Mammary epithelial cell (primary cell): ENCODE measurements at regions of chr15 and their contacts with region 1.

Region 1: DNA sequence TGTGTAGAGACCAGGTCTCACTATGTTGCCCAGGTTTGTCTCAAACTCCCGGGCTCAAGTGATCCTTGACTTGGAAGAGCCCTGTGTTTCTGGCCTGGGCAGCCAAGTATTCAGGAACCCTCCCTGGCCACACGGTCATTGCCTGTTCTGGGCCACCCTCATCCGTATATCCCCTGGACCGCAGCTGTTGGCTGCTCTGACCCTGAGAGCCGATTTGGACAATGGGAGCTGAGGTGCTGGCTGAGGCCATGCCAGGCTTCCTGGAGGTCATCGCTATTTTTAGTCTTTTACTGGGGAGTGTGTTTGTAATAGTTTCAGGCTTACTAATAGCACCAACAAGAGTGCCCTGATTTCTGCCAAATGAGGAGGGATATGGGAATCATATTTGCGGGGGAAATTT is 60.7 kb downstream of the ADAMTS7 start:
- DNase-seq: no peak
- H3K4me3 ChIP-seq: no peak overlapping the region
- H3K27ac ChIP-seq: no peak overlapping the region
- H3K4me1 ChIP-seq: no peaks in the 10 kb centered on the region
- H3K27me3 ChIP-seq: no peaks in the 10 kb centered on the region
- CTCF ChIP-seq: no peak

Region 2: GRCh38 chr15:78618490-78618934 is 132.1 kb before region 1 on chr15:
- CTCF ChIA-PET with region 1: no interaction called
- dilution Hi-C with region 1: no loop called
- in situ Hi-C with region 1: loop called in 1 of 2 experiments (anchors 5 kb)
- intact Hi-C with region 1: loop called (anchors 2 kb)
- DNase-seq: peak; percentile 57
- H3K4me3 ChIP-seq: no peak overlapping the region
- H3K27ac ChIP-seq: no peak overlapping the region
- H3K4me1 ChIP-seq: peaks cover 23% of the 10 kb centered on the region
- H3K27me3 ChIP-seq: peaks cover 21% of the 10 kb centered on the region
- CTCF ChIP-seq: peak; percentile 66 to 76

Region 3: DNA sequence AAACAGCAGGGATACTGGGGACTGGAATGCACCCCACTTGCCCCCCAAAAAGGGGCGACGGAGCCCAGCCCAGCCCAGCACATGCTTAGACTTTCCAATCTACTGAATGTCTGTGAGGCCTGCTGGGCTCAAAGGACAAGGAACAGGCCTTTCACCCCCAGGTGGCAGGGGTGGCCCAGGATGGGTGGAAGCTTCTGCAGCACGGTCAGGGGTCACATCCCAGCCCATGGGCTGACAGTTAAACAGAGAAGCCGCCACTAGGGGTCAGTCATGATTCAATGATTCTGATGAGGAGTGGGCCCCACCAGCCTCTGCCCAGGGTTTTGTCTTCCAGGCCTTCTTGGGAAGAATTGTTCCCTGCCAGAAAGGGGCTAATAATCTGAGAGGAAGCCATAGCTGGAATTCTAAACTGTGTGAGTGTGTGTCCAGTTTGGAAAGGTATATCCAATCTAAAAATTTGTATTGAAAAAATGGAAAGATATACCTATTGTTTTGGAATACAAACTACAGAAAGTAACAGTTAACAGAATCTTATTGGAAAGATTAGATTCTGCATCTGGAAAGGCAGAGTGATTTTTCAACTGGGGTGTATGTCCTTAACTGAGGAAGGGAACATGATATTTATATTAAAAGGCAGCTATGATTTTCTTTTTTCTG is 111.8 kb before region 1 on chr15:
- CTCF ChIA-PET with region 1: no interaction called
- dilution Hi-C with region 1: no loop called
- in situ Hi-C with region 1: no loop called
- intact Hi-C with region 1: loop called (anchors 2 kb)
- DNase-seq: no peak
- H3K4me3 ChIP-seq: no peak overlapping the region
- H3K27ac ChIP-seq: no peak overlapping the region
- H3K4me1 ChIP-seq: peaks cover 10% of the 10 kb centered on the region
- H3K27me3 ChIP-seq: no peaks in the 10 kb centered on the region
- CTCF ChIP-seq: peak; percentile 45 to 73

Region 4: GRCh38 chr15:78714890-78715289 is 35.7 kb before region 1 on chr15:
- CTCF ChIA-PET with region 1: no interaction called
- dilution Hi-C with region 1: no loop called
- in situ Hi-C with region 1: no loop called
- intact Hi-C with region 1: loop called (anchors 5 kb)
- DNase-seq: peak; percentile 48
- H3K4me3 ChIP-seq: no peak overlapping the region
- H3K27ac ChIP-seq: peak overlapping the region; percentile 67
- H3K4me1 ChIP-seq: peaks cover 12% of the 10 kb centered on the region
- H3K27me3 ChIP-seq: no peaks in the 10 kb centered on the region
- CTCF ChIP-seq: no peak